GM18951 (cell line): ENCODE measurements at regions of chr1 and their contacts with region 1.

Region 1: DNA sequence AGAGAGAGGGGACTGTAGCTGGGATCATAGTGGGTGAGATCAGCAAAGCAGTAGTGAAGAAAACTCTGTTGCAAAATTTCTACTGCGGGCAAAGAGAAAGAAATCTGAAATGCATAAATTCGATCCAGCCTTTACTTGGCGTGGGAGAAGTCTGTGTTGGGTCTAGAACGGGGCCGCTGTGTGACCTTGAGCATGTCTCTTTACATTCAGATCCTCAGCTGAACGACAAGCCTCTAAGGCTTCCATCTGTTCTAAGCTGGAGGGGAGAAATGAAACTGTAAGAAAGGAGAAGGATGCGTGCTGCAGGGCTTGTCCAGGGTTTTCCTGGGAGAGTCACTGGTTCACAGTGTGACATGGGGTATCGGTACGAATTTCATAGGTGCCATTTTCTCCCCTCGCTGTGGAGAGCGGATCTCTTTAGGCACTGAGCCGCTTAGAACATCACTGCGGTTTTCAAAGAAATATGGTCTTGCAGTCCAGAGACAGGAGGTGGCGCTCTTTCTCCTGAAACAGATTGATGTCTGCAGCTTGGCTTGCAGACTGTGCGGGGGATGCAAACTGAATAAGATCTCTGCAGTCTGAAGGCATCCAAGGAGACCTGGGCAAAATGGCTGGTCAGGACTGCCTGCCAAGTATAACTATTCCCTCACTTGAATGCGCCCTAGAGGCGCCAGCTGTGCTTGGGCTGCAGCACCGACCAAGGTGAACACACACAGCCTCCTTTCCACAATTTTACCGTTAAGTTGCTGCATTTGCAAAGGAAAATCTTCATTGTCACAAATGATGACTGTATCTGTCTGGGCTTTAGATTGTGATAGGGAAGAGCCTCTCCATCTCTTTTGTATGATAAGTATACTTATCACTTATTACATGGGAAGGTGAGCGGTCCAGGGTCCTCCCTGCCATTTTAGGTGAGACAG is 104.1 kb downstream of the XCL2 start:
- POLR2A ChIP-seq: no peak

Region 2: DNA sequence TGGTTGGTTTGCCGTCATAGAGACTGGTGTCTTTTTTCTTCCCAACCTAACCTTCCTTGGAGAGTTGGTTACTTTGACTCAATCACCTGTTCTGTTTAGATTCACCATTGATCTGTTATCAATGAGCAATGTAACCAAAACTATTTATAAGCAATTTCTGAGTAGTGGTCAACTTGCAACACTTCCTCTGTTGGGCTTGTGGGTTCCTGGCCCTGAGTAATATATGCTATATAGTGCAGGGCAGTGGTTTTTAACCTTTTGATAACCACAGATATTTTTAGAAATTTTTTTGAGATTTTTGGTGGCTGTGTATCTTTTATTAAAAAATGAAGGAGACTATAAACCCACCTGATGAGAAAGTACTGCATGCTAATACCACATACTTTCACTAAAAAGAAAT is 127.3 kb after region 1 on chr1:
- in situ Hi-C with region 1: loop called (anchors 10 kb)
- POLR2A ChIP-seq: no peak

Region 3: GRCh38 chr1:168585191-168585590 is 145.5 kb after region 1 on chr1:
- in situ Hi-C with region 1: loop called (anchors 10 kb)
- POLR2A ChIP-seq: no peak